CD4-positive, alpha-beta T cell (primary cell): ENCODE measurements at regions of chr5 and their contacts with region 1.

Region 1: DNA sequence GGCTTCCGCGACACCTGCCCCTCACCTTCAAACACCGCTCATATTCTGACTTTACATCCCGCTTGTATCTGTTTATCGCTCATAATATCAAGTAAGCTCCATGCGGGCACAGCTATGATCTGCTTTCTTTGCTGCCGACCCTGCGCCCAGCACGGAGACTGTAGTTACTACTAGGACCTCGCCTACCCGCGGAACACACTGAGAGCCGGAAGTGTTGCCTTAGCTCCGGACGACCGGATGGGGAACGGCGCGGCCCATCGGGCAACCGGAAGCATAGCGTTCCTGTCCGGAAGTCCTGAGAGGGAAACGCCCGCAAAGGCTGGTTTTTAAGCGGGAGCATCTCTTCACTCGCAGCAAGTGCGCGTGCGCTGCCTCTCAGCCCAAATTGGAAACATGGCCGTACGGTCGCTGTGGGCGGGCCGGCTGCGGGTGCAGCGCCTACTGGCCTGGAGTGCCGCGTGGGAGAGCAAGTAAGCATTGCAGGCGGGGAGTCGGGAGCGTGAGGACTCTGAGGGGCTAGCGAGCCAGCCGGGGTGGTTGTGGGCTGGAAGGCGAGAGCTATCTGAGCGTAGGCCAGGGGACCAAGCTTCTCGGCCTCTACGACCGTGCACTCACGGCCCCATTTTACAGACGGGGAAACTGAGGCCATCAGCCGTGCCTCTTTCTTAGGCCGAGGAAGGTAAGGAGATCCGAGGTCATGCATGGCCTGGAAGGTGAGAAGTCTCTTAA is at the start of gene GRPEL2:
- DNase-seq: peak; percentile 68 to 94 (median 82)
- ATAC-seq: peak; percentile 59
- H3K4me3 ChIP-seq: peak within 1 kb of the TSS; percentile 75
- H3K4me3 Mint-ChIP-seq: peak within 1 kb of the TSS; percentile 92
- H3K27ac ChIP-seq: peak within 1 kb of the TSS; percentile 76 to 85
- H3K27ac Mint-ChIP-seq: peak within 1 kb of the TSS; percentile 85
- H3K4me1 ChIP-seq: peaks cover 59% of the 10 kb centered on the region
- H3K4me1 Mint-ChIP-seq: peaks cover 59% of the 10 kb centered on the region
- H3K27me3 ChIP-seq: no peaks in the 10 kb centered on the region
- H3K27me3 Mint-ChIP-seq: no peaks in the 10 kb centered on the region
- CTCF ChIP-seq: no peak
- total RNA-seq, gene GRPEL2: 20.8 to 22.5 TPM

Region 2: DNA sequence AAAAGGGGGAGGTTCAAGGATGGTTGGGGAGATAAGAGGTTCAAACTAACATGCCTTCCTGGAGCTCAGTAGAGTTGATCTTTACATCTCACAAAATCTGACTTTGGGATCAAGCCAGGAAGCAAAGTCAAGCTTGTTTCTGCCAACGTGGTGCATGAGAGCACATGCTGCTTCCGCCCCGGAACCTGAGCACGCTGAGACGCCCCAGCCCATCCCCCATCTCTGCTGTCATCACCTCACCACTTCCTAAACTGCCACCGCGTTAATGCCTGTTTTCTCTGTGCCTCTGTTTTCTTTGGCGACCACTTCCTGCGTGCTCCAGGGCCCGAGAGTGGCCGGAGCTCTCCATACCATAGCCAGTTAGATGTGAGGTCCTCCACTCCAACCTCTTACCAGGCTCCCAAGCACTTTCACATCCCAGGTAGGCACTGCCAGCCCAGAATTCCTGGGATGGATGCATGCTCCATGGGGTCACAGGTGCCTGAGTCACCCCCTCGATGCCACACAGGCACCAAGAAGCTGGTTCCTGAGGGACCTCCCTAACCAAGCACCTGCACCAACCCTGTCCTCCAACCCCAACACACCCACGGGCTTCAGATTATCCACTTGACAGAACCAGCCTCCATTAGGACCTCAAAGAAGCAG is 104.8 kb before region 1 on chr5:
- CTCF ChIA-PET with region 1: no interaction called
- POLR2A ChIA-PET with region 1: interaction called, 13 read pairs
- intact Hi-C with region 1: no loop called
- DNase-seq: peak; percentile 73 to 93 (median 84)
- ATAC-seq: peak; percentile 99
- H3K4me3 ChIP-seq: no peak overlapping the region
- H3K4me3 Mint-ChIP-seq: peak overlapping the region; percentile 54
- H3K27ac ChIP-seq: peak overlapping the region; percentile 49 to 51
- H3K27ac Mint-ChIP-seq: peak overlapping the region; percentile 91
- H3K4me1 ChIP-seq: peaks cover 41% of the 10 kb centered on the region
- H3K4me1 Mint-ChIP-seq: peaks cover 70% of the 10 kb centered on the region
- H3K27me3 ChIP-seq: no peaks in the 10 kb centered on the region
- H3K27me3 Mint-ChIP-seq: no peaks in the 10 kb centered on the region
- CTCF ChIP-seq: no peak

Region 3: GRCh38 chr5:149317281-149318048 is 27.8 kb before region 1 on chr5:
- CTCF ChIA-PET with region 1: interaction called, 8 read pairs
- POLR2A ChIA-PET with region 1: interaction called, 6 read pairs
- intact Hi-C with region 1: loop called in 1 of 2 experiments (anchors 2 kb)
- DNase-seq: peak in 13 of 14 experiments; percentile 11 to 79 (median 25)
- ATAC-seq: peak; percentile 78
- H3K4me3 ChIP-seq: no peak overlapping the region
- H3K4me3 Mint-ChIP-seq: no peak overlapping the region
- H3K27ac ChIP-seq: no peak overlapping the region
- H3K27ac Mint-ChIP-seq: no peak overlapping the region
- H3K4me1 ChIP-seq: peaks cover 5% of the 10 kb centered on the region
- H3K4me1 Mint-ChIP-seq: peaks cover 6% of the 10 kb centered on the region
- H3K27me3 ChIP-seq: no peaks in the 10 kb centered on the region
- H3K27me3 Mint-ChIP-seq: no peaks in the 10 kb centered on the region
- CTCF ChIP-seq: peak; percentile 89

Region 4: DNA sequence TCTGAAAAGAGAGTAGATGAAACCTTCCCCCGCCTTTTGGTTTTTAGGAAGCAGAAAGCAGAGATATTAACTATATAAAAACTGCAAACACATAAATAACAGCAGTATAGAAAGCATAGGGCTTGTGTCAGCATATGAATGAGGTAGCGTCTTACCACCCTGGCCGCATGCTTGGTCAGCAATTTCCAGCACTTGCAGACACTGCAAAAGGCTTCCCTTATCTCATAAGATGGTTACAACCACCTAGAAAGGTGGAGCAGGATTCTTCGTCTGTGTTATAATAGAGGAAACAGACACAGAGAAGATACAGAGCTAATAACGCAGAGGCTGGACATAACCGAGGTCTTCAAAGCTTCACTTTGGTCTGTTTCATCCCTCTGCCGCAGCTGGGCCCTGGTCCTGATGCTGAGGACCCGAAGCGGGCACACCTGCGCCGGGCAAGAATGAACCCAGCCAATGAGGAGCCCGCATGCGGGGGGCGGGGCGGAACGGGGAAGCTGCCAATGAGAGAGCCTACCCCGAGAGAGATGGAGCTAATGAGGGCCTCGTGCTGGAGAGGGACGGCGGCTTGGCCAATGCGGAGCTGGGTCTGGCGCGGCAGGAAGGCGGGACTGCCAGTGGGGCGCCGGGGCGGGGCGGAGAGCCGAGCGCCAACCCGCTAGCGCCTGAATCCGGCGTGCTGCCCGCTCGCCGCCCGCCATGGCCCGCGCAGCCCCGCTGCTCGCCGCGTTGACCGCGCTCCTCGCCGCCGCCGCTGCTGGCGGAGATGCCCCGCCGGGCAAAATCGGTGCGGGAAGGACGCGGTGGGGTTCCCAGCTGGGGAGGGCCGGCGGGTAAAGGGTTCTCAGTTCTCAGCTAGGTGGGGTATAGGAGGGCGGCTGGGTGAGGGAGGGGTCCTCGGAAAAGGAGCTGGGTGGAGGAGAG is 12.3 kb after region 1 on chr5 and contains the start of gene PCYOX1L:
- CTCF ChIA-PET with region 1: interaction called, 21 read pairs
- POLR2A ChIA-PET with region 1: interaction called, 194 read pairs
- intact Hi-C with region 1: loop called (anchors 1 to 2 kb)
- DNase-seq: peak; percentile 85 to 98 (median 96)
- ATAC-seq: peak; percentile 96
- H3K4me3 ChIP-seq: peak within 1 kb of the TSS; percentile 67
- H3K4me3 Mint-ChIP-seq: peak within 1 kb of the TSS; percentile 94
- H3K27ac ChIP-seq: peak within 1 kb of the TSS; percentile 67 to 82
- H3K27ac Mint-ChIP-seq: peak within 1 kb of the TSS; percentile 91
- H3K4me1 ChIP-seq: peaks cover 47% of the 10 kb centered on the region
- H3K4me1 Mint-ChIP-seq: peaks cover 71% of the 10 kb centered on the region
- H3K27me3 ChIP-seq: no peaks in the 10 kb centered on the region
- H3K27me3 Mint-ChIP-seq: no peaks in the 10 kb centered on the region
- CTCF ChIP-seq: no peak
- total RNA-seq, gene PCYOX1L: 22.9 to 24.8 TPM

Region 5: DNA sequence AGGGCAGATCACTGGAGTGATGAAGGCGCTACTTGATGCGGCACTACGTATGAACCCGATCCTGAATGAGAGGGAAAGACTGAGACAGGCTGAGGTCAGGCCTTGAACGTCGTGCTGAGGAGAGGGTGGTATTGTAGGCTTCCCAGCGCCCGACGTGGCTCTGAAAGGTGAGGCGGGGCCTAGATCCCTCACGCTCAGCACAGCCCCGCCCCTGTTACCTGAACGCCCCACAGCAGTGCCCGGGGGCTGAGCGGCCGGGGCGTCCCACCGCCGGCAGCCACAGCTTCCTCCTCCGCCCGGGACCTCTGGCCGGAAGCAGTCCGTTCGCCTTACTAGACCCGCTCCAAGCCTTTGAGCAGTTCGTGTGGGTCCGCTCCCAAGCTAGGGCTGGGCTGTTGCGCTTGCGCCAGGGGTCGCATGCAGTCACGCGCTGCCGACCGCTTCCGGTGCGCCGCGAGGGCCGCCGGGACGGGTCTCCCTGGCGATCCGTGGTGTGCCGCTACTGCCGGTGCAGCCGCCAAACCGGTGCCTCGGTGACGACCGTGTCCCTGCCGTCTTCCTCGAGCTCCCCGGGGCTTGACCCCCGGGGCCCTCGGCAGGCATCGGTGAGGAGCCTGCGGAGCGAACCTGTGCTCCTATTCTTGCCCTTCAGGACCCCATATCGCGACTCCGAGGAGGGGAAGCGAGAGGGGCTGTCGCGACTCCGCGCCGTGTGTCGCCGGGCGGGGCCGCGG is 655.1 kb after region 1 on chr5 and contains the starts of genes HMGXB3 and TIGD6:
- CTCF ChIA-PET with region 1: no interaction called
- POLR2A ChIA-PET with region 1: no interaction called
- intact Hi-C with region 1: loop called in 1 of 2 experiments (anchors 5 kb)
- DNase-seq: peak; percentile 65 to 94 (median 76)
- ATAC-seq: peak; percentile 82
- H3K4me3 ChIP-seq: peak within 1 kb of the TSS; percentile 70
- H3K4me3 Mint-ChIP-seq: peak within 1 kb of the TSS; percentile 96
- H3K27ac ChIP-seq: peak within 1 kb of the TSS; percentile 72 to 79
- H3K27ac Mint-ChIP-seq: peak within 1 kb of the TSS; percentile 95
- H3K4me1 ChIP-seq: peaks cover 34% of the 10 kb centered on the region
- H3K4me1 Mint-ChIP-seq: peaks cover 38% of the 10 kb centered on the region
- H3K27me3 ChIP-seq: no peaks in the 10 kb centered on the region
- H3K27me3 Mint-ChIP-seq: no peaks in the 10 kb centered on the region
- CTCF ChIP-seq: no peak
- total RNA-seq, gene HMGXB3: 27.4 to 29.3 TPM
- total RNA-seq, gene TIGD6: 1.0 to 1.4 TPM